ENCODE measurements at regions of chr12 and their contacts with region 1.

Region 1: DNA sequence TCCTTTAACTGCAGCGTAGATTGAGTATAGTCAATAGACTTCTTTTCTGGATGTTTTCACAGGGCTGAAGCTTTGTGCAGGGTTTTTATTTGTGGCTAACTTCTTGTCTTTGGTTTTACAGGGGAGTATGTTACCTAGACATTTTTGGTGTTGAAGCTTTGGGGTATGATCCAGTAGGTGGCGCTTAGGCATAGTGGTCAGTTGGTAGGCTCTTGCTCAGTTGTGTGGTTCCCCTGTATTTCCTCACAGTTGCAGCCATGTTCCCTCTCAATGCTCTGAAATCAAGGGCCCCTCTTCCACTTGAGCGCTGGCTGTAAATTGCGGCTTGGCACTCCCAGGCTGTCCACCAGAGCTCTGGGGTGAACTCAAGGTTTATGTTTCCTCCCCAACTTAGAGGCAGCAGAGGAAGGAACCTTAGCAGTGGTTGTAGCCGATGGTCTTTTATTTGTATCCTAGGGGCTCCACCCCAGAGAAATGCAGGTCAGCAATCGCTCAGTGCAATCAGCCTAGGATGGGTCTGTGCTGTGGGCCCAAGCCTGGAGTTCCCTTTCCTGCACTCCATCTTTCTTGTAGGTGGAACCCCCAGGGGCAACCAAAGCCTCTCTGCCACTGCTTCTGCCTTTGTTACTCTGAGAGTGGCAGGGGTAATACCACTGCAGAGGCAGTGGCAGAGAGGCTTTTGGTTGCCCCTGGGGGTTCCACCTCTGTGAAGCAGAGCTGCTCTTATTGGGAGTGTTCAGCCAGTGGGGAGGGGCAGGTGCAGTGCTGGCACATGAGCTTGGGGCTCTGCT is 55.1 kb downstream of the CMAS start:
- DNase-seq: peak in 1 of 2 experiments; percentile 54
- H3K4me3 ChIP-seq: no peak overlapping the region
- H3K27ac ChIP-seq: no peak overlapping the region
- H3K4me1 ChIP-seq: no peaks in the 10 kb centered on the region
- H3K27me3 ChIP-seq: no peaks in the 10 kb centered on the region
- CTCF ChIP-seq: peak; percentile 22 to 80 (median 74)
- EP300 ChIP-seq: no peak
- POLR2A ChIP-seq: no peak
- RAD21 ChIP-seq: peak; percentile 74 to 78

Region 2: DNA sequence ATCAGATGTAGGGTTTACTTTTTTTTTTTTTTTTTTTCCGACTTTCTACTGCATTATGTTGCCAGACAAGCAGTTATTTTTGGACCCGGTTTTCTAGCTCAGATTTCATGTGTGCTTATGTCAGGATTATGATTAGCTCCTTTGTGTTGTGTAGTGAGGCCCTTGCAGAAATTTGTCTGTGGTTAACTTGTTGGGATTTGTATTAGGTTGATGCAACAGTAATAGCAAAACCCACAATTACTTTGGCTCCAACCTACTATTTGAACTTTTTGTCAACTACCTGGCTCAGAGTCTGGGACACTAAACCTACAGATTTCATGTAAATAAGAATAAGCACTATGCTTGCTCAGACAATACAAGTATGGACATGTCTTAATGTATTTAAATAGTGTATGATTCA is 282.5 kb before region 1 on chr12:
- CTCF ChIA-PET with region 1: no interaction called
- POLR2A ChIA-PET with region 1: no interaction called
- DNase-seq: no peak
- H3K4me3 ChIP-seq: no peak overlapping the region
- H3K27ac ChIP-seq: no peak overlapping the region
- H3K4me1 ChIP-seq: no peaks in the 10 kb centered on the region
- H3K27me3 ChIP-seq: no peaks in the 10 kb centered on the region
- CTCF ChIP-seq: no peak
- EP300 ChIP-seq: no peak
- POLR2A ChIP-seq: no peak
- RAD21 ChIP-seq: no peak

Region 3: GRCh38 chr12:22054155-22054554 is 47.0 kb before region 1 on chr12:
- CTCF ChIA-PET with region 1: no interaction called
- POLR2A ChIA-PET with region 1: no interaction called
- DNase-seq: no peak
- H3K4me3 ChIP-seq: no peak overlapping the region
- H3K27ac ChIP-seq: no peak overlapping the region
- H3K4me1 ChIP-seq: no peaks in the 10 kb centered on the region
- H3K27me3 ChIP-seq: no peaks in the 10 kb centered on the region
- CTCF ChIP-seq: no peak
- EP300 ChIP-seq: no peak
- POLR2A ChIP-seq: no peak
- RAD21 ChIP-seq: no peak

Region 4: DNA sequence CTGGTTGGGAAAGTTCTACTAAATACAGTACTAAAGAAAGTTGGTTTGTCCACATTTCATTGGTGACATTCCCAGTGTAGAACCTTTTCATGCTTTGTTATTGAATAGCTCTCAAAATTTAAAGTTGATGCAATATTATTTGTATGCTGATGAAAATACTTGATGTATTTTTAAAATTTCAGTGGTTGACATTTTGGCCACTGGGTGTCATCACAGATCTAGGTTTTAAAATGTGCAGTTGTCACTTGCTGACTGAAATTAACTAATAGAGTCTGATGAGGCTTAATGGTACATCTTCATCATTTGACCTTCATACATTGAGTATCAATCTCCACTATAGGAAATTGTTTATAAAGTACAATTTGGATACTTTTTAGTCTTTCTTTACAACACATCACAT is 18.0 kb before region 1 on chr12:
- CTCF ChIA-PET with region 1: interaction called, 10 read pairs
- POLR2A ChIA-PET with region 1: no interaction called
- DNase-seq: no peak
- H3K4me3 ChIP-seq: no peak overlapping the region
- H3K27ac ChIP-seq: no peak overlapping the region
- H3K4me1 ChIP-seq: 0 out of 7 replicates have a peak, but pooled peaks cover 0 to 2% (median 0%) of the 10 kb centered on the region in 4 experiments
- H3K27me3 ChIP-seq: no peaks in the 10 kb centered on the region
- CTCF ChIP-seq: peak in 2 of 3 experiments; percentile 12 to 38; a peak in 2 of 4 replicates
- EP300 ChIP-seq: no peak
- POLR2A ChIP-seq: no peak
- RAD21 ChIP-seq: peak; percentile 61 to 66

Region 5: DNA sequence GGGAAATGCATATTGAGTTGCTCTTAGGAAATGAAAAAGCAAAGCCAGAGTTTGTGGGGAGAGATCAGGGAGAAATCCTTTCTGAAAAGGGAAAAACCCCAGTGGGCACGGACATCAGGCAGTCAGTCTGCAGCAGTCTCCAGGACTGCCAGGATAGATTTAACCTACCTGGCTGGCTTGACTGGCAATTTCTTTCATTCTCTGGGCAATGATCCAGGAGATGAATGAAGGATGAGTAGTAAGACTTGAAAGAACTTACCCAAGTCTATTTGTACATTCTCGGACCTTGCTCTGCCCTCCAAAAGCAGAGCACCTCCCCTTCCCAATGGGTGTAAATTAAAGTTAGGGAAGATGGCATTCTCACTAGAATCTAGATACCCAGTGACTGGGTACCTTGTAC is 12.3 kb before region 1 on chr12:
- CTCF ChIA-PET with region 1: interaction called, 16 read pairs
- POLR2A ChIA-PET with region 1: no interaction called
- DNase-seq: no peak
- H3K4me3 ChIP-seq: no peak overlapping the region
- H3K27ac ChIP-seq: no peak overlapping the region
- H3K4me1 ChIP-seq: no peaks in the 10 kb centered on the region
- H3K27me3 ChIP-seq: no peaks in the 10 kb centered on the region
- CTCF ChIP-seq: no peak
- EP300 ChIP-seq: no peak
- POLR2A ChIP-seq: no peak
- RAD21 ChIP-seq: no peak

Region 6: GRCh38 chr12:22121227-22121626 is 20.1 kb after region 1 on chr12:
- CTCF ChIA-PET with region 1: interaction called, 29 read pairs
- POLR2A ChIA-PET with region 1: no interaction called
- DNase-seq: peak in 1 of 2 experiments; percentile 68
- H3K4me3 ChIP-seq: no peak overlapping the region
- H3K27ac ChIP-seq: no peak overlapping the region
- H3K4me1 ChIP-seq: no peaks in the 10 kb centered on the region
- H3K27me3 ChIP-seq: no peaks in the 10 kb centered on the region
- CTCF ChIP-seq: peak; percentile 80 to 84 (median 83)
- EP300 ChIP-seq: no peak
- POLR2A ChIP-seq: no peak
- RAD21 ChIP-seq: peak; percentile 72 to 74

Region 7: GRCh38 chr12:22334410-22335290 is 233.5 kb after region 1 on chr12 and contains the start of gene ST8SIA1:
- CTCF ChIA-PET with region 1: interaction called, 17 read pairs
- POLR2A ChIA-PET with region 1: interaction called, 3 read pairs
- DNase-seq: peak in 1 of 2 experiments; percentile 61
- H3K4me3 ChIP-seq: peak within 1 kb of the TSS; percentile 53 to 89 (median 67)
- H3K27ac ChIP-seq: no peak within 1 kb of the TSS
- H3K4me1 ChIP-seq: peaks cover 0 to 6% (median 0%) of the 10 kb centered on the region in 4 experiments; a peak in 3 of 7 replicates
- H3K27me3 ChIP-seq: peaks cover 6 to 26% (median 17%) of the 10 kb centered on the region in 4 experiments
- CTCF ChIP-seq: no peak
- EP300 ChIP-seq: no peak
- POLR2A ChIP-seq: no peak
- RAD21 ChIP-seq: no peak
- total RNA-seq, gene ST8SIA1: 3.2 and 4.4 TPM in 2 replicates

Region 8: DNA sequence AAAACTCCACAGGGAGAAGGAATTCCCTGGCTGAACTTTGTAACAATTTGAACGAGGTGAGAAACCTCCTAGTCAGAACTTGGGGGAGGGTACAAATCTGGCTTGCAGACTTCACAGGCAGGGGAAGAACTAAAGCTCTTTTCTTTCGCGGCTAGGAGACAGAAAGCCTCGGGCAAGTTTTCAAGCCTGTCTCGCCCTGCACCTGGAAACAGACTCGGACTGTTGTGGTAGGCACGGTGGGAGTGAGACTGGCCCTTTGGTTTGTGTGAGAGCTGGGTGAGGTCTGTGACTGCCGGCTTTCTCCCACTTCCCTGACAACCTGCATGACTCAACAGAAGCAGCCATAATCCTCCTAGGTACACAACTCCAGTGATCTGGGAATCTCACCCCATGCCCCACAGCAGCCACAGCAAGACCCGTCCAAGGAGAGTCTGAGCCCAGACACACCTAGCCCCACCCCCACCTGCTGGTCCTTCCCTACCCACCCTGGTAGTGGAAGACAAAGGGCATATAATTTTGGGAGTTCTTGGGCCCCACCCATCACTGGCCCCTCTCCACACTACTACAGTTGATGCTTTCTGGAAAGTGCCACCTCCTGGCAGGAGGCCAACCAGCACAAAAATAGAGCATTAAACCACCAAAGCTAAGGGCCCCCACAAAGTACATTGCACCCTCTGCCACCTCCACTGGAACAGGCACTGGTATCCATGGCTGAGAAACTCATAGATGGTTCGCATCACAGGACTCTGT is 336.1 kb after region 1 on chr12:
- CTCF ChIA-PET with region 1: interaction called, 15 read pairs
- POLR2A ChIA-PET with region 1: no interaction called
- DNase-seq: no peak
- H3K4me3 ChIP-seq: no peak overlapping the region
- H3K27ac ChIP-seq: no peak overlapping the region
- H3K4me1 ChIP-seq: no peaks in the 10 kb centered on the region
- H3K27me3 ChIP-seq: no peaks in the 10 kb centered on the region
- CTCF ChIP-seq: no peak
- EP300 ChIP-seq: no peak
- POLR2A ChIP-seq: no peak
- RAD21 ChIP-seq: no peak

Region 9: GRCh38 chr12:22443379-22444316 is 342.5 kb after region 1 on chr12:
- CTCF ChIA-PET with region 1: interaction called, 18 read pairs
- POLR2A ChIA-PET with region 1: no interaction called
- DNase-seq: peak; percentile 39 to 52
- H3K4me3 ChIP-seq: no peak overlapping the region
- H3K27ac ChIP-seq: no peak overlapping the region
- H3K4me1 ChIP-seq: no peaks in the 10 kb centered on the region
- H3K27me3 ChIP-seq: no peaks in the 10 kb centered on the region
- CTCF ChIP-seq: peak; percentile 51 to 93 (median 91)
- EP300 ChIP-seq: no peak
- POLR2A ChIP-seq: no peak
- RAD21 ChIP-seq: peak; percentile 96 to 99